Aorta (tissue), 5 donors: ENCODE measurements at regions of chr1 and their contacts with region 1.

Region 1: DNA sequence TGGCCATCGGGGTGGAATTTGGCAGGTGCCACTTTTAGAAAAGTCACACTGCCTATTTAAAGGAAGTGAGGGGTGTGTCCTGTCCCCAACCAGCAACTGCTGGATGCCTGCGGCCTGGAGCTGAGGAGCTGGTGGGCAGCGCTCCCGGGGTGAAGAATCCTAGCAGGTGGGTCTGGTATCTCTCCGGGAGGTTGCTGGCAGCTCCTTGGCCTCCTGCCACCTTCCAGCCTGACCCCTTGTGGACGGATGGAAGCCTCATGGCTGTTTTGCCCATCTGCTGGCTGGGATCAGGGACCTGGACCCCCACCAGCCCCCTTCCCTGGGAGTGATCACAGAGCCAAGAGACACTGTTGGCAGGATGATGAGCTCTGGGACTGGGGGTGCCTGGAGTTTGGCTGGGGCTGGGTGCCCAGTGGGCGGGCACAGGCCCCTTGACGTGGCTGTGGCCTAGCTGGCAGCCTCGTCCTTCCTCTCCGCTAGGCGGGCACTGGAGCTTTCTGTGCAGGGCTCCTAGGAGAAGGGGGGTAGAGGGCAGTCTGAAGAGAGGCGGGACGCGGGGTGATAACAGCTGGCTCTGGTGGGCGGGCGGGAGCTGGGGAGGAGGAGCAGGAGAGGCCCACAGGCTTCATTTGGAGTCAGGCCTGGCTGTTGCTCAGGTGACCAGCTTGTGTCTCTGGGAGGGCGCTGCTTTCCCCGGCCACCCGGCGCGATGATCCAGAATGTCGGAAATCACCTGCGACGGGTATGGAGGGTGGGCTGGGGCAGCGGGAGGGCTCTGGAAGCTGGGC is at the start of gene ACOT11:
- DNase-seq: peak; percentile 93 to 94
- ATAC-seq: peak; percentile 92
- H3K4me3 ChIP-seq: peak within 1 kb of the TSS; percentile 5 to 30
- H3K27ac ChIP-seq: peak within 1 kb of the TSS; percentile 7 to 25
- H3K4me1 ChIP-seq: no peaks in the 10 kb centered on the region
- H3K27me3 ChIP-seq: no peaks in the 10 kb centered on the region
- total RNA-seq, gene ACOT11: 17.5 to 20.9 TPM

Region 2: DNA sequence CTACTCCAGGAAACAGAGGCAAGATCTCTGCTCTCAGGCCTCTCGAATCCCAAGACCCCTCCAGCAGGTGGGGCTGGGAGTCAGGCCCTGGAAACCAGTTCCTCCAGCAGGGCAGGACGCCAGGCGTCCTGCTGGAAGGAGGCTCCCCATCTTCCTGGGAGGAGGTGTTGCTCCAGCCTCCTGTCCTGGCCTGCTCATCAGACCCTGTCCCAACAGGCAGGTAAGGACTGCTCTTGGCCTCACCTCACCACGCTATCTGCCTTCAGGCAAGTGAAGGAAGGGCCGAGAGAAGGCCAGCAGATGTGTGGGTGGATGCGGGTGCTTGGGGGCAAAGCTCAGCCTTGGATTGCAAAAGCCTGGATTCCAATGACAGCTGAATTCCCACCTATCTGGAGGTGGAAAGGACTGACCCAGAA is 224.5 kb before region 1 on chr1:
- intact Hi-C with region 1: no loop called
- DNase-seq: no peak
- ATAC-seq: no peak
- H3K4me3 ChIP-seq: no peak overlapping the region
- H3K27ac ChIP-seq: no peak overlapping the region
- H3K4me1 ChIP-seq: no peaks in the 10 kb centered on the region
- H3K27me3 ChIP-seq: no peaks in the 10 kb centered on the region

Region 3: GRCh38 chr1:54569339-54569738 is 21.5 kb after region 1 on chr1:
- intact Hi-C with region 1: loop called in 1 of 2 experiments (anchors 2 kb)
- DNase-seq: peak; percentile 72 to 83
- ATAC-seq: no peak
- H3K4me3 ChIP-seq: no peak overlapping the region
- H3K27ac ChIP-seq: peak overlapping the region; percentile 14 to 18
- H3K4me1 ChIP-seq: no peaks in the 10 kb centered on the region
- H3K27me3 ChIP-seq: no peaks in the 10 kb centered on the region

Region 4: GRCh38 chr1:54581621-54582035 is 33.8 kb after region 1 on chr1:
- intact Hi-C with region 1: loop called (anchors 5 kb)
- DNase-seq: peak; percentile 96 to 98
- ATAC-seq: peak; percentile 96
- H3K4me3 ChIP-seq: no peak overlapping the region
- H3K27ac ChIP-seq: peak overlapping the region; percentile 15 to 97
- H3K4me1 ChIP-seq: peaks cover 0 to 2% of the 10 kb centered on the region in 2 donors
- H3K27me3 ChIP-seq: no peaks in the 10 kb centered on the region

Region 5: DNA sequence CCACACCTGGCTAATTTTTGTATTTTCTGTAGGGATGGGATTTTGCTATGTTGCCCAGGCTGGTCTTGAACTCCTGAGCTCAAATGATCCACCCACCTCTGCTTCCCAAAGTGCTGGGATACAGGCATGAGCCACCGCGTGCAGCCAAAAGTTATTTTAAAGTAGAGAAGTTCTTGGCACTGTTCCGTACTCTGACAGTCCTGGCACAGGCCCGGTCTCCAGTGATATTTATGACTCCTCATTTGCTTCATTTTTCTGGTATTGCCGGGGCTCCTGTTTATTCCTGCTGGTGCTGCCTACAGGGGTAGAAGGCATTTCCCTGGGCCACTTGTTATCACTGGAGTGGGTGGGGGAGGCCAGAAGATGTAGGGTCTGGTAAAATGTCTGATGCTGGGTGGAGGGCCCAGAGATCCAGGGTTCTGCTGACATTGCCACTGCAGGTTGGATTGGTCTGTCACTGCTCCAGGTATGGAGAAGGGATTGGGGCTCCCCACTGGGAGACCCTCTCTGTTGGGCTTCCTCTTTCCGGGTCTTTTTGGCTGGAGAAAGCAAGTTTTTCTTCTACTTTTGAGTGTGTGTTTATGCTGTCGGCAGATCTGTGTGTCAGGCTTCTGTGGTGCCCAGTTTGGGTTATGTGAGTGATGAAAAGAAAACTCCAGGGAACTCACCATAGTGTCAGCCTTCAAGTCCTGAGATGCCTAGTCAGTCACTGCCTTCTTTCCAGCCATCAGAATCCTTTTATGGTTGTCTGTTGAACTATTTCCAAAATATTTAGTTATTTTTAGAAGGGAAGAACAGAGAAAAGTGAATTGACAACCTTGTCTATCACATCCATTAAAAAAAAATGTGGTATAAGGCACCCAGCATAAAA is 98.2 kb after region 1 on chr1:
- intact Hi-C with region 1: loop called in 1 of 2 experiments (anchors 5 kb)
- DNase-seq: peak; percentile 67 to 84
- ATAC-seq: peak; percentile 79
- H3K4me3 ChIP-seq: no peak overlapping the region
- H3K27ac ChIP-seq: peak overlapping the region; percentile 1 to 67
- H3K4me1 ChIP-seq: peaks cover 0 to 4% of the 10 kb centered on the region in 2 donors
- H3K27me3 ChIP-seq: no peaks in the 10 kb centered on the region